Right lobe of liver (tissue), 6 donors: ENCODE measurements at regions of chr16 and their contacts with region 1.

Region 1: DNA sequence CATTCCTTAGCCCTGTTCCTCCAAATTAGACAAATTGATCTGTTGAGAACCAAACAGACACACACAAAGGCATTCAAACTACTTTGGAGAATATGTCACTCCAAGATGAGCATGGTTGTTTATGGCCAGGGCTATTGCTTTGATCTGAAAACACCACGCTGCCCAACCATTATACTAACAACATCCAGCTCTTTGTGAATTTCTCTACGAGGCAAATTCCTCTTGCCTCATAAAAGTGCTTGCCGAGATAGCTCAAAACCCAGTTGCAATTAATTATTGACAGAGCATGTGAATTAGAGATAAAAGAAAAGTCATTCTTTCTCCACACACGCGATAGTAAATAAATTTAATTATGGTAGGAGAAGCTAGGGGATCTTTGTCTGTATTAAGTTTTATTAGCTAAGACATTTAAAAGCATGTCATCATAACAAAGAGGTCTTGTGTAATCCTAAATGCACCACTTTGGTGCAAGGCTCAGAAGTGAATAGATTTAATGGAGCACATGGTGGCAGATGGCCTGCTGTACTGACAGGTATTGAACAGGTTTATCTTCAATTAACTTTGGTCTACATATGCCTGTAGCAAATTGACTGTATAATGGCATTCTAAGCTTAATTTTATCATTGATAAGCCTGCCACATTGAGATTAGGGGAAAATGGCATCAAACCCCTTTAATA is 441.8 kb downstream of the HS3ST4 start:
- DNase-seq: no peak
- ATAC-seq: no peak
- H3K4me3 ChIP-seq: no peak overlapping the region
- H3K27ac ChIP-seq: no peak overlapping the region
- H3K4me1 ChIP-seq: no peaks in the 10 kb centered on the region
- H3K27me3 ChIP-seq: no peaks in the 10 kb centered on the region
- CTCF ChIP-seq: no peak
- POLR2A ChIP-seq: no peak

Region 2: DNA sequence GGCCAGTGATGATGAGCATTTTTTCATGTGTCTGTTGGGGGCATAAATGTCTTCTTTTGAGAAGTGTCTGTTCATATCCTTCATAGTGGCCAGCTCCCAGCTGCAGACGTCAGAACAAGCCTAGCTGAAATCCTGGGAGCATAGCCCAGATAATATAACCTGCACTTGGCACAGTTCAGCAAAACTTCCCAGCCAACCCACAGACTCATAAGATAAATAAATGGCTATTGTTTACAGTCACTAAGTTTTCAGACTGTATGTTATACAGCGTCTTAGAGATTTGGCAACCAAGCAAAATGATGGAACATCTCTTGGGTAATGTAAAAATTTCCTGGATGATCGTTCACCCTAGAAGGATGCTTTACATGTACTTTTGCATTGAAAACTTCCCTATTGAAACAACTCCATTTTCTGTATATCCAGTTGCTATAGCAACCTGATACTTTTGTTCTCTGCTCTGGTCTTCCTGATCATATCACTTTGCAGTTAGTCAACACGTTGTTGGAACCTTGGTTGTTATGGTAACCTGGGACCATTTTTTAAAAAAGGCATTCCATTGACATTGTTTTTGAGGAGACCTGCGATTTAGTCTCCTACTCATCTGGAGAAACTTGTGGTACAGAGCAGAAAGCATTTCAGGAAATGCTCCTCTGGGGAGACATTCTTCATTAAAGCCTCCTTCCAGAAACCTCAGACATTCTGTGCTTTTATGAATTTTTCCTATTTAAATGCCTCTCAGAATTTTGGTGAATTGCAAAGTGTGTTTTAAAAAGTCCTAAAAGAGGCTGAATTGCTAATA is 63.1 kb before region 1 on chr16:
- intact Hi-C with region 1: loop called in 1 of 2 experiments (anchors 10 kb)
- DNase-seq: no peak
- ATAC-seq: no peak
- H3K4me3 ChIP-seq: no peak overlapping the region
- H3K27ac ChIP-seq: no peak overlapping the region
- H3K4me1 ChIP-seq: no peaks in the 10 kb centered on the region
- H3K27me3 ChIP-seq: no peaks in the 10 kb centered on the region
- CTCF ChIP-seq: no peak
- POLR2A ChIP-seq: no peak

Region 3: DNA sequence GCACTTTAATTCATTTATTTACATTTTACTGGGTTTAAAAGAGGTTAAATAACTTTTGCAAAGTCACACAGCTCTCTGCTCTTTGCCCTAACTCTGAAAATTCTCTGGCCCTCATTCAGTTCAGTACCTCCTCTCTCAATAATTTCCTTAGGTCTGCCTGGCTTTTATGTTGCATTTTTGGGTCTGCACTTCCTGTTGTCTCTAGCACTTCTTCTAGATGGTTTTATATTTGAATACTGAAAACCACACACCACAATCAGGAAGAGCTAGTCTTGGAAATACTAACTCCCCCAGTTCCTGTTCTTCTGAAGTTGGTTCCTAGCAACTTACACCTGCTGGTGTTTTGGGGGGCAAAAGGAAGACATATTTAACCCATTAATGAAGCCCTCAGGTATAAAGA is 136.1 kb after region 1 on chr16:
- intact Hi-C with region 1: no loop called
- DNase-seq: no peak
- ATAC-seq: no peak
- H3K4me3 ChIP-seq: no peak overlapping the region
- H3K27ac ChIP-seq: no peak overlapping the region
- H3K4me1 ChIP-seq: no peaks in the 10 kb centered on the region
- H3K27me3 ChIP-seq: no peaks in the 10 kb centered on the region
- CTCF ChIP-seq: no peak
- POLR2A ChIP-seq: no peak

Region 4: DNA sequence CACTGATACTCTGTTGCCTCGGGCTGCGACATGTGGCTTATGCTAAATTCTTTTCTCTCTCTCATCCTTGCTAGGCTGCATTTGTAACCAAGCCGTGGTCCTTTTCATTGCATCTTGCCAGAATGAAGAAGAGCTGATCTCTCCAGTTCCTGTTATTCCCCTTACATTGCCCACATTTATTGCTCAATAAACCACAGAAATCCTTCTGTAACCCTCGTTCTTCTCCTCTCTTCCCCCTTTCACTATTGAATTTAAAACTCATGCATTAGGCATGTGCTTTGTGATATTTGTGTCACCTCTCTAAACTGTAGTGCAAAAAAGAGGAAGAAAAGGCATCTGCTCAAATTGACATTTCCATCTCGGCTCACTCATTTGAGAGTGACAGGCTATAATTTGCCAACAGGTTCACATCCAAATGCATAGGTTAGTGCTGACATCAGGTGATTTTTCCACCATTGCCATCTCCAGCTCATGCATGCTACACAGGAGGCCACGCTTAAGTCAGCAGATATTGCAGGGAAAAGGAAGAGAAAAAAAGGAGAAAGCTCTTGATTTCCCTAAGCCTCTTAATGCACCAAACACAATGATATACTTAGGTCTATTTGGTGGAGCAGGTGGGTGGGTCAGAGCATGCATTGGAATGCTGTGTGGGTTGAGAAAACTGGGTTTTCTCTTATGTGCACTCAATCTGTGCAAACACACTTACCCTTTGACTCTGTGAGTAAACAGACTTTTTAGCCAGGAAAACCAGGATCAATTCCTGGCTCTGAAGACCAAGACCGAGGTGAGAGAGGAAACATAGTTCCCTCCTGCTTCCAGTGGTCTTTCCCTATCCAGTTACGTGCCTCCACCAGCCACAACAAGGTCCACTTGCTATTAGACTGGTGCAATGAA is 200.9 kb after region 1 on chr16:
- intact Hi-C with region 1: no loop called
- DNase-seq: peak in 1 of 3 donors; percentile 49
- ATAC-seq: peak; percentile 88 to 95 (median 92)
- H3K4me3 ChIP-seq: peak overlapping the region; percentile 21 to 46 (median 41)
- H3K27ac ChIP-seq: no peak overlapping the region
- H3K4me1 ChIP-seq: peaks cover 0 to 18% (median 3%) of the 10 kb centered on the region in 4 donors
- H3K27me3 ChIP-seq: no peaks in the 10 kb centered on the region
- CTCF ChIP-seq: no peak
- POLR2A ChIP-seq: no peak